ENCODE measurements at regions of chr11 and their contacts with region 1.

Region 1: GRCh38 chr11:73597956-73598718 is at the start of gene FAM168A:
- DNase-seq: peak; percentile 87 to 98 (median 92)
- ATAC-seq: peak; percentile 88
- H3K4me3 ChIP-seq: peak within 1 kb of the TSS; percentile 84
- H3K4me3 Mint-ChIP-seq: peak within 1 kb of the TSS; percentile 95
- H3K27ac ChIP-seq: peak within 1 kb of the TSS; percentile 68 to 77
- H3K27ac Mint-ChIP-seq: peak within 1 kb of the TSS; percentile 97
- H3K4me1 ChIP-seq: peaks cover 15% of the 10 kb centered on the region
- H3K4me1 Mint-ChIP-seq: peaks cover 47% of the 10 kb centered on the region
- H3K27me3 ChIP-seq: no peaks in the 10 kb centered on the region
- H3K27me3 Mint-ChIP-seq: no peaks in the 10 kb centered on the region
- CTCF ChIP-seq: peak; percentile 8
- total RNA-seq, gene FAM168A: 17.9 to 19.4 TPM

Region 2: GRCh38 chr11:73019449-73019848 is 578.7 kb before region 1 on chr11:
- CTCF ChIA-PET with region 1: no interaction called
- POLR2A ChIA-PET with region 1: no interaction called
- intact Hi-C with region 1: no loop called
- DNase-seq: no peak
- ATAC-seq: no peak
- H3K4me3 ChIP-seq: no peak overlapping the region
- H3K4me3 Mint-ChIP-seq: no peak overlapping the region
- H3K27ac ChIP-seq: no peak overlapping the region
- H3K27ac Mint-ChIP-seq: no peak overlapping the region
- H3K4me1 ChIP-seq: no peaks in the 10 kb centered on the region
- H3K4me1 Mint-ChIP-seq: no peaks in the 10 kb centered on the region
- H3K27me3 ChIP-seq: no peaks in the 10 kb centered on the region
- H3K27me3 Mint-ChIP-seq: no peaks in the 10 kb centered on the region
- CTCF ChIP-seq: no peak

Region 3: DNA sequence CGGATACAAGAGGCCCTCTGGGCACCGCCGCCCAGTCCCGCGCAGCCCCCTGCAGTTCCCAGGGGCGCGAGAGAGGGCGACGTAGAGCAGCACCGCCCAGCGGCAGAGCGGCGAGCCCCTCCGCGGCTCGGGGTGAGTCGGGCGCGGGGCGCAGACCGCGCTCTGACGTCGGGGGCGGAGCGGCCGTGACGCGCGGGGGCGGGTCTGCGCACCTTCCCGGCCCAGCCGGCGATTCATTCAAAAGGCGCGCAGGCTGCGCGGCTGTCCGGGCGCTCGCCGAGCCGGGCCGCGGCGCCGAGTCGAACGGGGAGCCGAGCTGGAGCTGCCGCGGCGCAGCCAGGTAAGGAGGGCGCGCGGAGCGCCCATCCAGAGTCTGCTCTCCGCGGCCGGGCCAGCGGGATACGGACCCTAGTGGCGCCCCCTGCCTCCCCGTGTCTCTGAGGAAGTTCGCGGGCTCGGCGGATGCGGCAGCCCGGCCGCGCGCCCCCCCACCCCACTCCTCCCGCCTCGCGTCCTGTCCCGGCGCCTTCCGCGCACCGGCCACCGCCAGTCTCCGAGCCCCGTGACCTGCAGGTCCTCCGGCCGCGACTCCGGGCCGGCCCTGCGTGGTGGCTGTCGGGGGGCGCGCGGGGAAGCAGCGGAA is 221.9 kb before region 1 on chr11 and contains the start of gene RELT:
- CTCF ChIA-PET with region 1: no interaction called
- POLR2A ChIA-PET with region 1: interaction called, 4 read pairs
- intact Hi-C with region 1: loop called in 1 of 2 experiments (anchors 2 kb)
- DNase-seq: peak; percentile 79 to 97 (median 93)
- ATAC-seq: peak; percentile 94
- H3K4me3 ChIP-seq: peak within 1 kb of the TSS; percentile 84
- H3K4me3 Mint-ChIP-seq: peak within 1 kb of the TSS; percentile 93
- H3K27ac ChIP-seq: peak within 1 kb of the TSS; percentile 78 to 91
- H3K27ac Mint-ChIP-seq: peak within 1 kb of the TSS; percentile 88
- H3K4me1 ChIP-seq: peaks cover 58% of the 10 kb centered on the region
- H3K4me1 Mint-ChIP-seq: peaks cover 42% of the 10 kb centered on the region
- H3K27me3 ChIP-seq: no peaks in the 10 kb centered on the region
- H3K27me3 Mint-ChIP-seq: no peaks in the 10 kb centered on the region
- CTCF ChIP-seq: peak; percentile 86
- total RNA-seq, gene RELT: 107 to 114 TPM

Region 4: DNA sequence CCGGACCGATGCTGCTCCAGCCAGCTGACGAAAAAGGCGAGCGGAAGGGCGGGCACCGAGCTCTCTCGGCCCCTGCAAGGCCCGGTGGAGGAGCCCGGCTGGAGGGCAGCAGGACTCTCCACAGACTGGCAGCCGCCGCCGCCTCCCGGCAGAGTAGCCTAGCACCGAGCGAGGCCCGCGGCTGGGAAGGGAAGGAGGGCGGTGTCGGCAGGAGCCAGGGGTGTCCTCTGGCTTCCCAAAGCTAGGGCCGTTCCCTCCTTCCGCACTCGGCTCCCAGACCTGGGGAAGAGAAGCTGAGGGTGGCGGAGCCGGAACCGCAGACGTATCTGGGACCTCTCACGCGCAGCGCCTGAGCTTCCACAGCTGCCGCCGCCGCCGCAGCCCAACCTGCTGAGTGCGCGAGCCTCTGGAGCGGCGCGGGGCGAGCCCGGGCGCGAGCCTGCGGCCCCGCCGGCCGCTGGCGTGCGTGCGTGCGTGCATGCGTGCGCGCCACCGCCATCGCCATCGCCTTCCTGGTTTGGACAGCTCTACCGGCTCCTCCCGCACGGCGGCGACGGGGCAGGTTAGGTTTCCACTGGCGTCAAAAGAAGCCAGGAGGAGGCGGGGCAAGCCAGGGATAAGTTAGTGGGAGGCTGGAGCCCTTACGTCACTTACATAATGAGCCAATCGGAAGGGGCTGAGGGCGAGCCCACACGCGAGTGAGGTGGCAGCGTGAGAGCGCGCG is 162.7 kb after region 1 on chr11 and contains the start of gene RAB6A:
- CTCF ChIA-PET with region 1: interaction called, 4 read pairs
- POLR2A ChIA-PET with region 1: interaction called, 10 read pairs
- intact Hi-C with region 1: loop called in 1 of 2 experiments (anchors 2 kb)
- DNase-seq: peak; percentile 98 to 100 (median 100)
- ATAC-seq: peak; percentile 90
- H3K4me3 ChIP-seq: peak within 1 kb of the TSS; percentile 93
- H3K4me3 Mint-ChIP-seq: peak within 1 kb of the TSS; percentile 84
- H3K27ac ChIP-seq: peak within 1 kb of the TSS; percentile 82 to 84
- H3K27ac Mint-ChIP-seq: peak within 1 kb of the TSS; percentile 83
- H3K4me1 ChIP-seq: peaks cover 13% of the 10 kb centered on the region
- H3K4me1 Mint-ChIP-seq: peaks cover 39% of the 10 kb centered on the region
- H3K27me3 ChIP-seq: no peaks in the 10 kb centered on the region
- H3K27me3 Mint-ChIP-seq: no peaks in the 10 kb centered on the region
- CTCF ChIP-seq: no peak
- total RNA-seq, gene RAB6A: 42.6 to 49.3 TPM

Region 5: DNA sequence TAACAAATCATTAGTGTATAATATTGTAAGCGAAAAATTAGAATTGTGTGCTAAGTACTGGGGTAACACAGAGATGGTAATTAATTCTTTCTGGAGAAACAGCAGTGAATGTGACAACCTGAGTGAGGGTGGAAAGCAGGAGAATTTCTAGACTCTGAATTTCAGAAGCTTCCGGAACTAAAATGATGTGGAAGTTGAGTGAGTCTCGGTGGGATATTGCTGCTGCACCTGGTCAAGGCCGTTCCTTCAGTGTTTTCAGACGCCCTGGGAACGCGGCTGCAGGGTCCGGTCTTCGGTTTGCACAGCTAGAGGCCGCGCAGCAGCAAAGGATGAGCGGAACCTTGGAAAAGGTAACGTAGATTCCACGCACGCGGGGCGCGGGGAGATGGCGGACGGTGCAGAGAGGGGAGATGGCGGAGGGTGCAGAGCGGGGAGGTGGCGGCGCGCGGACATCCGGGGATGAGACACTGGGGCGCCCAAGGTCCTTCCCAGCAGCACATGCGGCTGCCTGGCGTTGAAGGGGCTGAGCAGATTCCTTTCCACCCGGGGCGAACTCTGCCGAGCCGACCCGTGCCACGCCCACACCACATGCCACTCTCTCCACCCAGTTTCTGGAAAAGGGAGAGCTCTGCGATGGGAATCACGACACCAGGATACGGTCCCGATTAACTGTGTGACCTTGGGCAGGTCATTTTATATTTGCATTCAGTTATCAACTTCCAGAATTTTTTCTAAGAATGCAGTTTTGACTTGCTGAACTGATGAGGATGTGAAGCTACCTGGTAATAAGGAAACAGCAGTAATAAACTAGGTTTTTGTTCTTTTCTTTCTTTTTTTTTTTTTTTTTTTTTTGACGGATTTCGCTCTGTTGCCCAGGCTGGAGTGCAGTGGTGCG is 189.8 kb after region 1 on chr11 and contains the start of gene MRPL48:
- CTCF ChIA-PET with region 1: no interaction called
- POLR2A ChIA-PET with region 1: interaction called, 6 read pairs
- intact Hi-C with region 1: loop called in 1 of 2 experiments (anchors 2 kb)
- DNase-seq: peak; percentile 78 to 93 (median 84)
- ATAC-seq: peak; percentile 99
- H3K4me3 ChIP-seq: peak within 1 kb of the TSS; percentile 93
- H3K4me3 Mint-ChIP-seq: peak within 1 kb of the TSS; percentile 99
- H3K27ac ChIP-seq: peak within 1 kb of the TSS; percentile 80 to 87
- H3K27ac Mint-ChIP-seq: peak within 1 kb of the TSS; percentile 100
- H3K4me1 ChIP-seq: peaks cover 19% of the 10 kb centered on the region
- H3K4me1 Mint-ChIP-seq: peaks cover 31% of the 10 kb centered on the region
- H3K27me3 ChIP-seq: no peaks in the 10 kb centered on the region
- H3K27me3 Mint-ChIP-seq: no peaks in the 10 kb centered on the region
- CTCF ChIP-seq: no peak
- total RNA-seq, gene MRPL48: 9.5 to 10.1 TPM

Region 6: DNA sequence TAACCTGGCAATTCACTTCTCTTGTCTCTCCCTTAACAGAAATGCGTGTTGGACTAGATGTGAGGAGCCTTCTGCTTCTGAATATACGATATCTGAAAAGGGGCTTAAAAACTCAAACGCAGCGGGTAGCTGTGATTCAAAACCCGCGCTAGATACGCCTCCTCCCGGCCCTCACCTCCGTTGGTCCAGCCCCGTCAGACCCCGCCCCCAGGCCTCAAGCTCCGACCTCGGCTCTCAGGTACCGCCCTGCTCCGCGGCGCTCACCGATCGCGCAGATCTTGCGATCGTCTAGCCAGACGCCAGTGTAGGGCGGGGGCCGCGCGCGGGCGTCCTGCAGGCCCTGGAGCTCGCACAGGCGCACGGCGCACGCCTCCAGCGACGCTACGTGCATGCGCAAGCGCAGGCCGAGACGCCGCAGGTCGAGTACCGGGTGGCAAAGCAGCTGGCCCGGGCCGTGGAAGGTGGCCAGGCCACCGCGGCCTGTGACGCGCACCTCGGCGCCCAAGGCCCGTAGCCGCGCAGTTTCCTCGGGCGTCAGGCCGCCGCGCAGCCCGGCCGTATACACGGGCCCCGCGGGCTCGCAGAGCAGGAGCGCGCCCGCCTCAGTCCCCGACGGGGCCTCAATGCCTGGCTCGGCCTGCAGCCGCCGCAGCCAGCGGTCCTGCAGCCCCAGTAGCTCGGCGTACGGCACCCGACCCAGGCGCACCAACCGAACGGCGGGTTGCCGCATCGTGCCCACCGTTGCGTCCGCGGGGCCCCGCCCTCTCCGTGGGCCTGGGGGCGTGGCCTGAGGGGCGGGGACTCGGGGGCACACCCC is 895.0 kb after region 1 on chr11 and contains the start of gene LIPT2:
- CTCF ChIA-PET with region 1: no interaction called
- POLR2A ChIA-PET with region 1: no interaction called
- intact Hi-C with region 1: loop called in 1 of 2 experiments (anchors 2 kb)
- DNase-seq: peak; percentile 94 to 99 (median 98)
- ATAC-seq: peak; percentile 95
- H3K4me3 ChIP-seq: peak within 1 kb of the TSS; percentile 66
- H3K4me3 Mint-ChIP-seq: peak within 1 kb of the TSS; percentile 91
- H3K27ac ChIP-seq: peak within 1 kb of the TSS; percentile 61 to 94
- H3K27ac Mint-ChIP-seq: peak within 1 kb of the TSS; percentile 86
- H3K4me1 ChIP-seq: peaks cover 12% of the 10 kb centered on the region
- H3K4me1 Mint-ChIP-seq: peaks cover 41% of the 10 kb centered on the region
- H3K27me3 ChIP-seq: no peaks in the 10 kb centered on the region
- H3K27me3 Mint-ChIP-seq: no peaks in the 10 kb centered on the region
- CTCF ChIP-seq: no peak
- total RNA-seq, gene LIPT2: 10.7 to 10.9 TPM